ENCODE measurements at regions of chr13 and their contacts with region 1.

Region 1: DNA sequence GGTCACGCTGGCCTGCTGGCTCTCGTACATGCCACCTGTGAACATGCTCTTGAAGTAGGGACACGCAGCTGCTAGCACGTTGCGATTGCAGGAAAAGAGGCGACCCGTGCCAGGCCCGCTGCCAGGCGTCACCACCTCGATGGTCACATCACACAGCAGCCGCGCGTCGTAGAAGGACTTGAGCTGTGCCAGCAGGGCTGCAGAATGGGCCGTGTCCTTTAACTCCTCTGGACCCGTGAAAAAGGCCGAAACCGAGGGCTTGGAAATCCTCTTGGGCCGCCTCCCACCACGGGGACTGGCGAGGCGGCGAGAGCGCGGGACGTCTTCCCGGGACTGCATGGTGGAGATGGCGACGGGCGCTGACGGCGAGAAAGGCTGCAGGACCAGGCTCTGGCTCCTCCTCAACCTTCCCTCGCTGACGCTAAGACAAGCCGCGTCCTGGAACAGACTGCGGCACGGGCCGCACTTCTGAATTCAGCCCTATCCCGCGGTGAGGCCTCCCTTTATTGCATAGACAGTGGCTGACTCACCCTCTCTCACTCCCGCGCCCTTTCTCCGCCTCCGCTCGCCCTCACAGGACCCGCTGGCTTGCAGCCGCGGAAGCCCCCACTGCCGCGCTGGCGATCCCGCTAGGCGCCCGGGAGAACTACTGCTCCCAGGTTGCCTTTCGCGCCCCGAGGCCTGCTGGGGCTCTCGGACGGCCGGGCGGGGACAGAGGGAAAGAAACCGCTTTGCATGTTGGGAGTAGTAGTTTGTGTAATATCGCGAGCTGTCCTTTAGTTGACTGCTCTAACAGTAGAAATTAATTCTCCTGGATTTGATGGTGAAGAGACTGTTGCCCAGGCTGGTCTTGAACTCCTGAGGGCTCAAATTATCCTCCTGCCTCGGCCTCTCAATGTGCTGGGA is at the start of gene KBTBD7:
- DNase-seq: peak; percentile 88
- H3K4me3 Mint-ChIP-seq: peak within 1 kb of the TSS; percentile 93
- H3K27ac Mint-ChIP-seq: peak within 1 kb of the TSS; percentile 97
- H3K4me1 Mint-ChIP-seq: peaks cover 58% of the 10 kb centered on the region
- H3K27me3 Mint-ChIP-seq: no peaks in the 10 kb centered on the region
- total RNA-seq, gene KBTBD7: 6.2 and 6.3 TPM in 2 replicates

Region 2: DNA sequence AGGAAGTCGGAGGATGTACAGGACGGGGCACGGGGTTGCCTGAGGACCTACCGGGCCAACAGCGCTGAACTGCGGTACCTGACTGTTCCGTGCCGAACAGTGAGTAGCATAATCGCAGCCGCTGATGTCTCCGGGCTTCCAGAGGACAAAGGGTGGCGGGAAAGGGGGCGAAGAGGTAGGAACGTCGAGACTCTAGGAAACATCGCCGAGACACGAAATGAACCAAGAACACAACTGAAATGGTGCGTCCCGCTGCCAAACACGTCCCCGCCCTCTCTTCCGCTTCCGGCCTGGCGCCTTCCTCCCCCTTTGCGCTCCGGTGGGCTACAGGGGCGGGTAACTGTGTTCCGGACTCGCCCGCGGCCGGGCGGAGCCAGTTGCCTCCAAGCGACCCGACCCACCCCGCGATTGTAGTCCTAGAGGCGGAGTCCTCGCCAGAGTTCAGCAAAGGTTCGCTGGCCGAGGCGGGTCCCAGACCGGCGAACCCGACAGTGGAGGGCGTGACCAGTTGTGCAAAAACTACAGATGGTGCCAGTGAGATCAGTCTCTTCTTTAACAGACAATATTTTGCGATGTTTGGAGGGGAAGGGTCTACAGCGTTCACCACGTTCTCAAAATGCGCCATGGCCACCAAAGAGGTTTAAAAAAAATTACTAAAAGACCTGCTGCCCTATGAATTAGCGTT is 423.1 kb before region 1 on chr13 and contains the start of gene MRPS31:
- intact Hi-C with region 1: loop called (anchors 5 kb)
- DNase-seq: peak; percentile 93
- H3K4me3 Mint-ChIP-seq: peak within 1 kb of the TSS; percentile 99
- H3K27ac Mint-ChIP-seq: peak within 1 kb of the TSS; percentile 98
- H3K4me1 Mint-ChIP-seq: peaks cover 29% of the 10 kb centered on the region
- H3K27me3 Mint-ChIP-seq: no peaks in the 10 kb centered on the region
- total RNA-seq, gene MRPS31: 41.6 and 42.6 TPM in 2 replicates

Region 3: DNA sequence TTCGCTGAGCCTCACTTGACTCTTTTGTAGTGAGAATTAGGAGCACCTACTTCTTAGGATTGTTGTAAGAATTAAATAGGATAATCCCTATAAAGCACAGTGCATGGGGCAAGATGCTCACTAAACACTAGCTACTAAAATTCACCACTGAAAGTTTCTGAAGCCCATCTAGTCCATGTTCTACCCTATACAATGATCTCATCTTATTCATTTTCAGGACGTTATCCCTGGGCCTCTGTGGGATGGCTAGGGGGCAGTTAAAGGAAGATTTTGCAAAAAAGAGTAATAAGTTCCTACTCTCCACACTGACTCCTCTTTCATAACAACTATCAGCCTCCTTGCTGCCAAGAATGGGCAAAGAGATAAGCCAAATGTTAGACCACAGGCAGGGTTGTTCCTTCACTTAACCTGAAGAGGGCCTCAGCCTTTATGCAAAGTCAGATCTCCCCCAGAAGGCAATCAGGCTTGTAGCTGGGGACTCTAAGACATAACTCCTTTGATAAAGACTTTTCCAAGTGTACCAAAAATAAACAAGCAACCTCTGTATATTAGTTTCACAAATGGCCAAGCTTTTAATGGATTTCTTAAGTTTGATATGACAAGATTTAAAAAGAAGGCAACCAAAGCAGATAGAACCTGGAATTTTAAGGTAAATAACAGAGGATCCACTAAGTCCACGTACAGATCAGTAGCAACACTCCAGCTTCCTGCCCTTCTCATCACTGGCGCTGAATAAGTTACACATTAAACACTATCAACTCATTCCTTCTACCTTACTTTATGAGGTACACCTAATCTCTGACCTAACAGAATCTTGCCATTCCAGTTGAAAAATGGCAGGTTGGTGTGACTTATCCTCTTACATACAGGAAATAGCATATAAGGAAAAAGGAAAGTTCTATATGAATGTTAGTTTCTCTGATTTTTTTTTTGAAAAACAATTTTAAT is 219.4 kb before region 1 on chr13:
- intact Hi-C with region 1: loop called (anchors 10 kb)
- DNase-seq: no peak
- H3K4me3 Mint-ChIP-seq: peak overlapping the region; percentile 45
- H3K27ac Mint-ChIP-seq: peak overlapping the region; percentile 18
- H3K4me1 Mint-ChIP-seq: peaks cover 94% of the 10 kb centered on the region
- H3K27me3 Mint-ChIP-seq: no peaks in the 10 kb centered on the region

Region 4: GRCh38 chr13:41054212-41054877 is 139.8 kb before region 1 on chr13:
- intact Hi-C with region 1: loop called (anchors 1 kb)
- DNase-seq: peak; percentile 24
- H3K4me3 Mint-ChIP-seq: no peak overlapping the region
- H3K27ac Mint-ChIP-seq: no peak overlapping the region
- H3K4me1 Mint-ChIP-seq: peaks cover 47% of the 10 kb centered on the region
- H3K27me3 Mint-ChIP-seq: no peaks in the 10 kb centered on the region

Region 5: GRCh38 chr13:41179593-41180250 is 14.4 kb before region 1 on chr13:
- intact Hi-C with region 1: loop called (anchors 1 kb)
- DNase-seq: no peak
- H3K4me3 Mint-ChIP-seq: no peak overlapping the region
- H3K27ac Mint-ChIP-seq: peak overlapping the region; percentile 23
- H3K4me1 Mint-ChIP-seq: no peaks in the 10 kb centered on the region
- H3K27me3 Mint-ChIP-seq: no peaks in the 10 kb centered on the region

Region 6: GRCh38 chr13:41263261-41264027 is 69.3 kb after region 1 on chr13 and contains the start of gene MTRF1:
- intact Hi-C with region 1: loop called (anchors 1 kb)
- DNase-seq: peak; percentile 72
- H3K4me3 Mint-ChIP-seq: peak within 1 kb of the TSS; percentile 95
- H3K27ac Mint-ChIP-seq: peak within 1 kb of the TSS; percentile 100
- H3K4me1 Mint-ChIP-seq: peaks cover 12% of the 10 kb centered on the region
- H3K27me3 Mint-ChIP-seq: no peaks in the 10 kb centered on the region
- total RNA-seq, gene MTRF1: 17.5 and 20.2 TPM in 2 replicates

Region 7: DNA sequence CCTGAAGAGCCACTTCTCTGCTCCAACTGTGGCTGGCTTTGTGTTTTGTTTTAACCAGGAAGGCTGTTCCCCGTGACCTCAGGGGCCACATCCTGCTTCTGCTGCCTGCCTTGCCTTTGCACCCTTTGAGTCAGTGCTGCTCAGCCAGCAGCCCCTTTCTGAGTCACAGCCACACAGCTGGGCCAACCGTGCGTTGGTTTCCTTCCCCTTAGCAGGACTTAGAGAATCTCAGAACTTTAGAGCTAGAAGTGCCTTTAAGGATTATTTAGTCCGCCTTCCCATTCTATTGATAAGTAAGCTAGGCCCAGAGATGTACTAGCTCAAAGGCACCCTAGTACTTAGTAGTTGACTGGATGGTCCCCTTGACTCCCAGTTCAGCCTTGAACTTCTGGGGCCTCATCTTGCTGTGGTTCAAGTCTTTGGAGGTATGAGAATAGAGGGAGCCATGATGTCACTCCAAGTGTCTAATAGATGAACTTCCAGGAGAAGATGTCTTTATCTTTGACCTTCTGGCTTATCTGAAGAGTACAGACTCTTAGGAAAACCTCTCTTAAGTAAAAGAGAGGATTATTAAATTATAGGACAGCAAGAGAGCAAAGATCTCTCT is 271.2 kb after region 1 on chr13:
- intact Hi-C with region 1: loop called (anchors 1 kb)
- DNase-seq: peak; percentile 89
- H3K4me3 Mint-ChIP-seq: peak overlapping the region; percentile 80
- H3K27ac Mint-ChIP-seq: peak overlapping the region; percentile 96
- H3K4me1 Mint-ChIP-seq: peaks cover 90% of the 10 kb centered on the region
- H3K27me3 Mint-ChIP-seq: no peaks in the 10 kb centered on the region

Region 8: GRCh38 chr13:41562083-41562482 is 367.9 kb after region 1 on chr13:
- intact Hi-C with region 1: no loop called
- DNase-seq: no peak
- H3K4me3 Mint-ChIP-seq: no peak overlapping the region
- H3K27ac Mint-ChIP-seq: no peak overlapping the region
- H3K4me1 Mint-ChIP-seq: peaks cover 11% of the 10 kb centered on the region
- H3K27me3 Mint-ChIP-seq: no peaks in the 10 kb centered on the region

Measured in activated T-helper 1 cell treated with anti-CD3 and anti-CD28 coated beads, Interleukin-12 subunit alpha, Interleukin-12 subunit beta, Interleukin-2, Interleukin-4 antibody, amounts not matched to agents 30 ng/mL and 10 ng/mL and 1 ng/mL, durations not matched to agents 14 hours and 24 hours and 36 hours (primary cell).